ENCODE measurements at regions of chr6 and their contacts with region 1.

Region 1: GRCh38 chr6:119349323-119350042 is at the start of gene MAN1A1:
- DNase-seq: peak; percentile 66
- ATAC-seq: peak; percentile 94
- H3K4me3 ChIP-seq: peak within 1 kb of the TSS; percentile 98
- H3K27ac ChIP-seq: peak within 1 kb of the TSS; percentile 75
- H3K4me1 ChIP-seq: peaks cover 5% of the 10 kb centered on the region; the same call in 1 of the 2 replicates
- H3K27me3 ChIP-seq: no peaks in the 10 kb centered on the region
- CTCF ChIP-seq: no peak
- POLR2A ChIP-seq: peak; percentile 57; the same call in 1 of the 2 replicates
- RAD21 ChIP-seq: no peak
- total RNA-seq, gene MAN1A1: 5.9 and 11.4 TPM in 2 replicates

Region 2: GRCh38 chr6:118776607-118777549 is 572.6 kb before region 1 on chr6:
- CTCF ChIA-PET with region 1: no interaction called
- POLR2A ChIA-PET with region 1: no interaction called
- dilution Hi-C with region 1: no loop called
- in situ Hi-C with region 1: no loop called
- intact Hi-C with region 1: no loop called
- DNase-seq: peak; percentile 79
- ATAC-seq: peak; percentile 87
- H3K4me3 ChIP-seq: no peak overlapping the region
- H3K27ac ChIP-seq: no peak overlapping the region
- H3K4me1 ChIP-seq: peaks cover 4% of the 10 kb centered on the region; the same call in 1 of the 2 replicates
- H3K27me3 ChIP-seq: peaks cover 4% of the 10 kb centered on the region
- CTCF ChIP-seq: peak; percentile 73
- POLR2A ChIP-seq: no peak
- RAD21 ChIP-seq: peak; percentile 72

Region 3: DNA sequence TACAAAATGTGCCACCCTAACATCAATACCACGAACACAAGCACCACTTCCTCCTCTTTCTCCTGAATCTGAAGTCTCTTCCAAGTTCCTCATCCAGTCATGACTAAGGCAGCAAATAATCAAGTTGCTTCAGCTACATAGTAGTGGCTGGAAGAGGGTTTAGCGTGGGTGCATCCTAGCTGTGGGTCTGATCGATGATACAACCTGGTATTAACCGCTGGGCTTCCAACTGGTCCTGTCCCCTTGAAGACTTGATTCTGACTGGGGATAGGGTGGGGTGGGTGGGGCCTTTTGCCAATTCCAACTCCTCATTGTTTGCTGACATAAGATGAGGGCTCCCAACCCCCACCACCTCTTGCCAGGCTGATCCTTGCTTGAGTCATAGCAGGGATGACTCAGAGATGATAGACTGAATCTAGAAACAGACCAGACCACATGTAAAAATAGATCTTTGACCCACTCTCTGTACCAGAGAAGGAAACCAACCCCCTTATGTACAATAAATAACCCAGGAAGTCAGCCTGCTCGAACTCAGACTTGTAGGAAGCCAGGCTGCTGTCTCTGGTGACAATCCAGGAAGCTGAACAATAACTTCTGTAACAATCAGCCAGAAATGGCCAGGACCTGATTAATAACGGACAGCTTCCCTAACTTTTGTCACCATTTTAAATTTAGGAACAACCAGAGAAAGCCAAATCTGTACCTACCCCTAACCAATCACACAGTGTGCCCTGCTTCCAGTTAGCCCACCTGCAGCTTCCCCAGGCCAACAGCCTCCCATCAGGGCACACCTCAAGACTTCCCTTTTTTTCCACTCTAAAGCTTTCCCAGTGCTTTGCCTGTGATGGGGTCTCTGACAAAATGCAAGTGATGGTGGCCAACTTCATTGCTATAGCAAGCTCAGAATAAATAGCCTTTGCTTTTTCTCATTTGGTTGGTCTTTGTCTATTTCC is 202.1 kb before region 1 on chr6:
- CTCF ChIA-PET with region 1: interaction called, 3 read pairs
- POLR2A ChIA-PET with region 1: no interaction called
- dilution Hi-C with region 1: no loop called
- in situ Hi-C with region 1: loop called (anchors 5 kb)
- intact Hi-C with region 1: loop called (anchors 1 kb)
- DNase-seq: peak; percentile 98
- ATAC-seq: peak; percentile 88
- H3K4me3 ChIP-seq: no peak overlapping the region; the same call in 1 of the 2 replicates
- H3K27ac ChIP-seq: peak overlapping the region; percentile 55; the same call in 1 of the 2 replicates
- H3K4me1 ChIP-seq: peaks cover 16% of the 10 kb centered on the region
- H3K27me3 ChIP-seq: no peaks in the 10 kb centered on the region
- CTCF ChIP-seq: no peak
- POLR2A ChIP-seq: no peak
- RAD21 ChIP-seq: no peak

Region 4: GRCh38 chr6:119313937-119314884 is 35.3 kb before region 1 on chr6:
- CTCF ChIA-PET with region 1: no interaction called
- POLR2A ChIA-PET with region 1: no interaction called
- dilution Hi-C with region 1: no loop called
- in situ Hi-C with region 1: no loop called
- intact Hi-C with region 1: no loop called
- DNase-seq: no peak
- ATAC-seq: no peak
- H3K4me3 ChIP-seq: no peak overlapping the region
- H3K27ac ChIP-seq: no peak overlapping the region
- H3K4me1 ChIP-seq: peaks cover 4% of the 10 kb centered on the region
- H3K27me3 ChIP-seq: no peaks in the 10 kb centered on the region
- CTCF ChIP-seq: no peak
- POLR2A ChIP-seq: no peak
- RAD21 ChIP-seq: no peak

Region 5: GRCh38 chr6:119484637-119484997 is 135.1 kb after region 1 on chr6:
- CTCF ChIA-PET with region 1: no interaction called
- POLR2A ChIA-PET with region 1: no interaction called
- dilution Hi-C with region 1: no loop called
- in situ Hi-C with region 1: no loop called
- intact Hi-C with region 1: loop called (anchors 5 kb)
- DNase-seq: peak; percentile 94
- ATAC-seq: peak; percentile 91
- H3K4me3 ChIP-seq: no peak overlapping the region
- H3K27ac ChIP-seq: no peak overlapping the region
- H3K4me1 ChIP-seq: no peaks in the 10 kb centered on the region
- H3K27me3 ChIP-seq: no peaks in the 10 kb centered on the region
- CTCF ChIP-seq: no peak
- POLR2A ChIP-seq: no peak
- RAD21 ChIP-seq: no peak

Region 6: DNA sequence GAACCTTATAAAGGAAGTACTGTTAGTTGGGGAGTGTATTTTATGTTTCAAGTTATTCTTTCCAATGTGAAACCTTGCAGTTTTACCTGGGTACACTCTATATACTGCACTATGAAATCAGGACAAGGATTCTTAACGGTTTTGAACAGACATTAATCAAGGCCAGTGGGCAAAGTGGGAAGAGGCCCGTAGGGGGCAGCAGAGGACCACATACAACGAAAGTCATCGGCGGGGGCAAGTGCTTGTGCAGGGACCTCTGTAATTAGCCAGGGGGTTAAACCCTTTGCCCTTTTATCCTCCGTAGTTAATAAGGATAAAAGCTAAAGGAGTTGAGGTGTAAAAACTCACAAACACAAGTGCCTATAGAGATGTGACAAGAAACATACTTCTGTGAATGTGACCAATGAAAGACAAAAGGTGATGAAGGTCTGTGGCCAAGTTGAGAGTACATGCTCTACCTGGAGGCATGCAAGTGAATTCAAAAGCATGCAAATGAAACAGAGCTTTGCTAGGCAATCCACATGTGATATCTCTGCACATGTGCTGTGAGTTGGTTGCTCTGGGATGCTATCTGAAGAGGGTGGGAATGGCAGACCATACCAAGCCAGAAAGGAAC is 392.8 kb after region 1 on chr6:
- CTCF ChIA-PET with region 1: no interaction called
- POLR2A ChIA-PET with region 1: no interaction called
- dilution Hi-C with region 1: no loop called
- in situ Hi-C with region 1: no loop called
- intact Hi-C with region 1: loop called (anchors 2 kb)
- DNase-seq: peak; percentile 24
- ATAC-seq: peak; percentile 57
- H3K4me3 ChIP-seq: no peak overlapping the region
- H3K27ac ChIP-seq: no peak overlapping the region
- H3K4me1 ChIP-seq: no peaks in the 10 kb centered on the region
- H3K27me3 ChIP-seq: no peaks in the 10 kb centered on the region
- CTCF ChIP-seq: peak; percentile 63
- POLR2A ChIP-seq: no peak
- RAD21 ChIP-seq: peak; percentile 58

Region 7: GRCh38 chr6:121222656-121223055 is 1873.2 kb after region 1 on chr6:
- CTCF ChIA-PET with region 1: no interaction called
- POLR2A ChIA-PET with region 1: no interaction called
- dilution Hi-C with region 1: no loop called
- in situ Hi-C with region 1: no loop called
- intact Hi-C with region 1: loop called (anchors 10 kb)
- DNase-seq: peak; percentile 79
- ATAC-seq: peak; percentile 83
- H3K4me3 ChIP-seq: no peak overlapping the region
- H3K27ac ChIP-seq: no peak overlapping the region
- H3K4me1 ChIP-seq: no peaks in the 10 kb centered on the region
- H3K27me3 ChIP-seq: no peaks in the 10 kb centered on the region
- CTCF ChIP-seq: peak; percentile 50
- POLR2A ChIP-seq: no peak
- RAD21 ChIP-seq: peak; percentile 37